Activated B cell treated with CpG ODN at 0.5 μM for 24 hours (primary cell): ENCODE measurements at regions of chr11 and their contacts with region 1.

Region 1: GRCh38 chr11:118448294-118448693 is 12.0 kb downstream of the KMT2A start:
- DNase-seq: no peak
- ATAC-seq: peak; percentile 63
- H3K4me3 Mint-ChIP-seq: no peak overlapping the region
- H3K27ac Mint-ChIP-seq: no peak overlapping the region
- H3K4me1 Mint-ChIP-seq: peaks cover 66% of the 10 kb centered on the region
- H3K27me3 Mint-ChIP-seq: no peaks in the 10 kb centered on the region
- CTCF ChIP-seq: no peak

Region 2: DNA sequence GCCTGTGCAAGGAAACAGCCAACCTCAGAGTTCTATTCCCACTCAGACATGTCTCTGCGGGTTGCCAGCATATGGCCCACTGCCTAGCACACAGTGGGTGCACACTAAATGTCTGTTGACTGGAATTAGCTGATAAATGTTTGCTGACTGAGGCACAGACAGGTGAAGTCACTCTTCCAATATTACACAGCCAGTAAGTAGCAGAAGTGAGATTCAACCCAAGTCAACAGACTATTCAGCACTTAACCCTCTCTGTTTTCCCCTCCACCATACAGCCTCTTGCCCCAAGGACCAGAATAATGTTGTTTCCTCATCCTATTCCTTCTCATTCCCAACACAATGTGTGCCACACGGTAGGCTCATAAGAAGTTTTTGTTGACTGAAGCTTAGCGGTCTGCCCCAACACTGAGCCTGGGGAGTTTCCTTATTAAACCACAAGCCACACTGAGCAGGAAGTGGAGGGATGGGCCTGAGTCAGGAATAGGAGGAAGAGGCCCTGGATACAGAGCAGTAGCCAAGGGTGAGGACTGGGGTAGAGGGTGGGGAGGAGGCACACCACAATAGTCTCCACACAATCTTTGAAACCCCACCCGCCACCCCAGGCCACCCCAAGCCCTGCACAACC is 477.8 kb before region 1 on chr11:
- CTCF ChIA-PET with region 1: no interaction called
- POLR2A ChIA-PET with region 1: interaction called, 11 read pairs
- intact Hi-C with region 1: no loop called
- DNase-seq: no peak
- ATAC-seq: peak; percentile 69
- H3K4me3 Mint-ChIP-seq: no peak overlapping the region
- H3K27ac Mint-ChIP-seq: no peak overlapping the region
- H3K4me1 Mint-ChIP-seq: peaks cover 26% of the 10 kb centered on the region
- H3K27me3 Mint-ChIP-seq: no peaks in the 10 kb centered on the region
- CTCF ChIP-seq: no peak

Region 3: DNA sequence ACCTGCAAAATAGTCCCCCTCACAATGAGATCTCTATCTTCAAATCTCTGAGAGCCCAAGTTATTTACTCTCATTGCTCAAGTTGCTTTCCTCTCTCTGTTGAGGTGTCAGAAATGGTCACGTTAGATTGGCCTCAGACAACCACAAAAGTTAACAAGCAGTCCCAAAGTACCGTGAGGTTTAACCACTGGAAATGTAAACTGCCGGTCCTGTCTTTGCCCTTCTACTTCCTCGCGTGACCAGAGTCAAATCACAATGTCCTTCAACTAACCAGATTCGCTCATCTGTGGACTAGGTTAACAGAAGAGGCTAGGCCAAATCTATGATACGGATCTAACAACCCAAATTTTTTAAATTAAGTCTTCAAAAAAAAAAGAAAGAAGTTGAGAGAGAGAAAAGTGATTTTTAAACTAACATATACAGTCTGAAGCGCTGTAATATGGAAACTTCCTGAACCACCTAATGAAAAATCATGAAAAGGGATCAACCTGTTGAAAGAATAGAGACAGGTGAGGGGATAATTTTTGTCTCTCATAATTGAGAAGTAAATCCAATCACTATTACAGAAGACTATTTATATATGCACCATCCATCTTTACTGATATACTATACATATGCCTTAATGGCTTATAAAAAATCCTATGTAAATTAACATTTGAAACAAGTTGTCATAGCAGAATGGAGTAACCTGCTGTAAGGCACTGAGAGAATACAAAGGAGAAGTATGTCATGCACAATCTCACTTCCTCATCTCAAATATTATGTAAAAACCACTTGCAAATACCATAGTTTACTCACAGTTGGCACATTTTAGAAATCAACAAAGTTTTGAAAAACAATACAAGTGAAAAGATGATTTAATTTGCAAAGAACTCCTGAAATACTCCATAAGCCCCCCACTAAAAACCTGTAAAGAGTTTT is 220.2 kb before region 1 on chr11:
- CTCF ChIA-PET with region 1: no interaction called
- POLR2A ChIA-PET with region 1: no interaction called
- intact Hi-C with region 1: no loop called
- DNase-seq: no peak
- ATAC-seq: peak; percentile 73
- H3K4me3 Mint-ChIP-seq: peak overlapping the region; percentile 63
- H3K27ac Mint-ChIP-seq: peak overlapping the region; percentile 87
- H3K4me1 Mint-ChIP-seq: peaks cover 59% of the 10 kb centered on the region
- H3K27me3 Mint-ChIP-seq: peaks cover 6% of the 10 kb centered on the region
- CTCF ChIP-seq: no peak

Region 4: GRCh38 chr11:118277306-118277705 is 171.0 kb before region 1 on chr11:
- CTCF ChIA-PET with region 1: no interaction called
- POLR2A ChIA-PET with region 1: no interaction called
- intact Hi-C with region 1: no loop called
- DNase-seq: no peak
- ATAC-seq: no peak
- H3K4me3 Mint-ChIP-seq: no peak overlapping the region
- H3K27ac Mint-ChIP-seq: no peak overlapping the region
- H3K4me1 Mint-ChIP-seq: peaks cover 9% of the 10 kb centered on the region
- H3K27me3 Mint-ChIP-seq: peaks cover 11% of the 10 kb centered on the region
- CTCF ChIP-seq: no peak

Region 5: GRCh38 chr11:118948000-118948399 is 499.7 kb after region 1 on chr11:
- CTCF ChIA-PET with region 1: no interaction called
- POLR2A ChIA-PET with region 1: no interaction called
- intact Hi-C with region 1: no loop called
- DNase-seq: no peak
- ATAC-seq: no peak
- H3K4me3 Mint-ChIP-seq: no peak overlapping the region
- H3K27ac Mint-ChIP-seq: no peak overlapping the region
- H3K4me1 Mint-ChIP-seq: no peaks in the 10 kb centered on the region
- H3K27me3 Mint-ChIP-seq: peaks cover 17% of the 10 kb centered on the region
- CTCF ChIP-seq: no peak